Sciatic nerve (tissue), 2 donors: ENCODE measurements at regions of chr4 and their contacts with region 1.

Region 1: DNA sequence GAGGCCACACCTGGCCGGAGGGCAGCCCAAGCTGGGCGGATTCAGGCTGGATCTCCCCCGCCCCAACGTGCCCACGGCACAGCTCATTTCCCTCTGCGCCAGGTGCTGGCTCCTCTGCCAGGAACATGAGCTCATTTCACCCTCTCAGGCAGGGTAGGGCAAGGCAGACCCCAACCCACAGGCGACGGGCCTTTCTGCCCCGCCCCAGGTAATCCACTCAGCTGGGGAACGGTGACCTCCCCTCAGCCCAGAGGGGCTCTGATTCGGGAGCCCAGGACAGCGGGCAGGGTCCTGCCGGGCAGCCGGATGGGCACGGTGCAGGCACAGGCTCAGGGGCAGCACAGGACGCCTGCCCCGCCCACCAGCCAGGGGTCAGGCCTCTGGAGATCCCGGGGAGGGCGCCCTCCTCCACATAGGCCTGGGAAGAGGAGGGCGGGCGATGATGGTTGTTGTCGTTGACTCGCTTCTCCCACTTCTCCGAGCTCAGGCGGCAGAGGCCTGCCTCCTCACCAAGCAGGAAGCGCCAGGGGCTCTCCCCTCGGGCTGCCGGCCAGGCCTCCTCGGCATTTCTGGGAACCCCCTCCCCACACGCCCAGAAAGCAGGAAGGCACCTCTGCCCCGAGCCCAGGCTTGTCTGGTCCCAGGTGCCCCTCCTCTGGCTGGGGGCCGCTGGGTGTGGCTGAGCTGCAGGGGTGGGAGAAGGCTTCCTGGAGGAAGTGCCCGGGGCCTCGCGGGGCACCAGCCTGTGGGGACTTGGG is 31.1 kb downstream of the TACC3 start:
- DNase-seq: no peak
- ATAC-seq: peak; percentile 14

Region 2: DNA sequence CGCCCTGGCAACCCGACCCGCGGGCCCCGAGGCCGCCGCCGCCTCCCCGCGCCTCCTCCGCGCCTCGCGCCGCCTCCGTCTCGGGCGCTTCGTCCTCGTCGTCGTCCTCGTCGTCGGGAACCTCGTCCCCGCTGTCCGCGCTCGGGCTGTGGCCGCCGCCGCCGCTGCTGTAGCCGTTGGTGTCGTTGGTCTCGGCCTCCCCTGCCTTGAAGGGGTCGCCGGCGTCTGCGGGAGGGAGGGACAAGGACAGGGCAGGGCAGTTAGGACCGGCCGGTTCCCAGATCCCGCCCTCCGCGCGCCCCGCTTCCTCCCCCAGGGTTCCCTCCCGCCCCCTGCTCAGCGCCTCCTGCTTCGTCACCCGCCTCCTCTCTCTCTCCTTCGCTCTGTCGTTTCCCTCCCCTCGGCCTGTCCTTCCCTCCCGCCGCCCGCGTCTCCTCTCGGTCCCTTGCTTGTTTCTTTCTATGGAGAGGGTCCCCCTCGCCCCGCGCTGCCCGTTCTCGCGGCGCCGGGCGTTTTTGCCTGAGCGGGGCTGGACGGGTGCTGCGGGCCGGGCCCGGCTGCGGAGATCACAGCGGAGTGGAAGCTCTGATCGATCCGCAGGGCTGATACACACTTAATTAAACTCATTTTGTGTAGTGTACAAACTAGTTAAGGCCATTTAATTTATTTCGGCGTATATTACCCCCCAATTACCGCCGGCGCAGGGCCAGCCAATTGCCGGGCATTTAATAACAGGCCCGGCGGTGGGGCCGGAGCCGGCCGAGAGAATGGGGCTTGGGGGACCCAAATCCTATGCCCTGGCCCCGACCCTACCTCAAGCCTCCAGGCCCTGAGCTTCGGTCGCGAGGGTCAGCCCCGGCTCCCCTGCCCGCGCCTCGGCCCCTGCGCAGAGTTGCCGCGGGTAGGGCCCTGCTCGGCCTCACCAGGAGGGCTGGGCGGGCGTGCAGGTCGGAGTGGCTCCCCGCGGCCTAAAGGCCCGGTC is 348.6 kb before region 1 on chr4:
- intact Hi-C with region 1: no loop called
- DNase-seq: peak; percentile 52
- ATAC-seq: no peak

Region 3: DNA sequence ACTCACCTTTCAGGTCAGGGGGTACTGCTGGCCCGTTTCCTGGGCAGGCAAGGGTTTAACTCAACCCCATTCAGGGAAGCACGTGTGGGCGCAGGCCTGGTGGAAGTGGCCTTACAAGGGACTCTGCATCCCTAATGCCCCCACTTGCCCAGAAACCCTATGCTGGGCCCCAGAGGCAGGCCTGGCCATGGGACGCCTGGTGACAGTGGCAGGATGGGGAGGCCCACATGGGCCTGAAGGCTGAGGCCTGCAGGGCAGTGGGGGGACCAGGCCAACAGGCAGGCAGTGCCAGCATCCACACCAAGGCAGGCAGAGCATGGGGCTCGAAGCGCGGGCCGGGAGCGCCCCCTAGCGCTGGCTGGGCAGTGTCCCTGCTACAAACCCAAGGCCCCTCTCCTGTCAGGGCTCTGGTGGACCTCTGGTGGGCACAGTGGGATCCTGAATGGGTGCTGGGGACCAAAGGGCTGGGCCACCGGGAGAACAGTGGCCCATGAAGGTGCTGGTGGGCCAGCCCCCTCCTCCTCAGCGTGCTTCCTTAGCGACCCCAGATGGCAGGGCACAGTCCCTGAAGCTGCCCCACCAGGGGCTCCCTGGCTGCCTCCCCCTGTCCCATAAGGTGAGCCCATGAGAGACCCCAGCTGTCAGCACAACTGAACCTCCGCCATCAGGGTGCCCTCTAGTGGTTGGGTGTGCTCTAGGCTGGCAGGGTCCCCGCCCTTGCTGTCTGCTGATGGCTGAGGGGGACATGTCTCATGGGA is 57.5 kb after region 1 on chr4:
- intact Hi-C with region 1: loop called (anchors 5 kb)
- DNase-seq: peak; percentile 80
- ATAC-seq: peak; percentile 77